ENCODE measurements at regions of chr1 and their contacts with region 1.

Region 1: GRCh38 chr1:245156081-245156735 is 1.4 kb downstream of the KIF26B start:
- DNase-seq: peak; percentile 80
- H3K4me3 ChIP-seq: peak overlapping the region; percentile 76
- H3K27ac ChIP-seq: no peak overlapping the region
- H3K4me1 ChIP-seq: peaks cover 43% of the 10 kb centered on the region
- H3K27me3 ChIP-seq: peaks cover 64% of the 10 kb centered on the region
- CTCF ChIP-seq: peak; percentile 90

Region 2: GRCh38 chr1:245380790-245381535 is 224.8 kb after region 1 on chr1:
- intact Hi-C with region 1: loop called (anchors 10 kb)
- DNase-seq: no peak
- H3K4me3 ChIP-seq: no peak overlapping the region
- H3K27ac ChIP-seq: no peak overlapping the region
- H3K4me1 ChIP-seq: no peaks in the 10 kb centered on the region
- H3K27me3 ChIP-seq: peaks cover 26% of the 10 kb centered on the region
- CTCF ChIP-seq: peak; percentile 58

Region 3: DNA sequence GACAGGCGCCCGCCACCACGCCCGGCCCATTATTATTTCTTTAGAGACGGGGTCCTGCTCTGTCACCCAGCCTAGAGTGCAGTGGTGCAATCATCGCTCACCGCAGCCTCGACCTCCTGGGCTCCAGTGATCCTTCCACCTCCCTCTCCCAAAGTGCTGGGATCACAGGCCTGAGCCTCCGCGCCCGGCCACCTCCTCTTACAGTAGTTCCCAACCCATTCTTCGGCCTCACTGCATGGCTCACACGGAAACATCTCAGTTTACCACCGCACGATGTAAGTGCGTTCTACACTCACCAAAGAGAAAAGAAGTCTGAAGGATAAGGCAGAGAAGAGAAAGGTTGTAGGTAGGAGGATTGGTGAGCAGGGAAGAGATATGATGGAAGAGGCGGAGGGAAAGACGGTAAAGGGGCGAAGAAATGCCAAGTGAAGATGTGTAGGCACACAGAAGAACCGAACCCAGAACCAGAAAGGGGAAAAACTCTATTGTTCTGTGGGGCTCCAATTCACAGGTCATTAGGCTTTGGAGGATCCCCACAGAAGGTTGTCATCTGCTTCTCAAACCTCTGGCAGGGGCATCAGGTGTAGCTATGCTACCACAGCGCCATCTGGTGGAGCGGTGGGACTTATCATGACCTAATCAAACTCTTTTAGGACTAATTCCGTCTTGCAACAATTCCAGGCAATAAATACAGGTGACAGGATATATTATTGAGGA is 846.7 kb after region 1 on chr1:
- intact Hi-C with region 1: loop called (anchors 5 kb)
- DNase-seq: peak; percentile 85
- H3K4me3 ChIP-seq: no peak overlapping the region
- H3K27ac ChIP-seq: no peak overlapping the region
- H3K4me1 ChIP-seq: no peaks in the 10 kb centered on the region
- H3K27me3 ChIP-seq: no peaks in the 10 kb centered on the region
- CTCF ChIP-seq: peak; percentile 88

Region 4: DNA sequence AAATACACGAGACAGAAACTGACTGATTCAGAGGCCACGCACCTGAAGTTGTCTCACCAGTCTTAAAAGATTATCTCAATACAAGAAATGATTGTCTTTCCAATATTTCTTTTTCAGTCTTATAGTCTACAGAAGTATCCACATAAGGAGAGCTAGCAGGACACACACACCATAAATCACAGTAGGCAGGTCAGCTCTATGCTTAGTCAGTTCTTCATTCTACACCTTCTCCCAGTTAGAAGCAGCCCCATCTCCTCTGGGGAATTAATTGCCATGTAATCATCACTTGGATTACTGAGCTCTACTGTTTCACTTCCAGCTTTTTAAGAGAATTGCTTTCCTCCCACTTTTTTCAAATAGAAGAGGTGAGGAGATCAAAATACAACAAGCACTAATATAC is 1291.3 kb after region 1 on chr1:
- intact Hi-C with region 1: loop called (anchors 10 kb)
- DNase-seq: no peak
- H3K4me3 ChIP-seq: no peak overlapping the region
- H3K27ac ChIP-seq: no peak overlapping the region
- H3K4me1 ChIP-seq: peaks cover 20% of the 10 kb centered on the region
- H3K27me3 ChIP-seq: no peaks in the 10 kb centered on the region
- CTCF ChIP-seq: no peak

Measured in left ventricle myocardium inferior (tissue), 1 donor.